ENCODE measurements at regions of chr15 and their contacts with region 1.

Region 1: GRCh38 chr15:75204340-75205063 is 2.8 kb downstream of the C15orf39 start:
- DNase-seq: peak; percentile 92 to 98
- H3K4me3 ChIP-seq: no peak overlapping the region
- CTCF ChIP-seq: peak in 1 of 3 donors; percentile 83
- POLR2A ChIP-seq: no peak

Region 2: GRCh38 chr15:75029378-75030022 is 175.0 kb before region 1 on chr15:
- intact Hi-C with region 1: loop called (anchors 2 kb)
- DNase-seq: peak; percentile 93 to 99
- H3K4me3 ChIP-seq: no peak overlapping the region
- CTCF ChIP-seq: peak in 1 of 3 donors; percentile 97
- POLR2A ChIP-seq: no peak